Caco-2 (cell line): ENCODE measurements at regions of chr5 and their contacts with region 1.

Region 1: DNA sequence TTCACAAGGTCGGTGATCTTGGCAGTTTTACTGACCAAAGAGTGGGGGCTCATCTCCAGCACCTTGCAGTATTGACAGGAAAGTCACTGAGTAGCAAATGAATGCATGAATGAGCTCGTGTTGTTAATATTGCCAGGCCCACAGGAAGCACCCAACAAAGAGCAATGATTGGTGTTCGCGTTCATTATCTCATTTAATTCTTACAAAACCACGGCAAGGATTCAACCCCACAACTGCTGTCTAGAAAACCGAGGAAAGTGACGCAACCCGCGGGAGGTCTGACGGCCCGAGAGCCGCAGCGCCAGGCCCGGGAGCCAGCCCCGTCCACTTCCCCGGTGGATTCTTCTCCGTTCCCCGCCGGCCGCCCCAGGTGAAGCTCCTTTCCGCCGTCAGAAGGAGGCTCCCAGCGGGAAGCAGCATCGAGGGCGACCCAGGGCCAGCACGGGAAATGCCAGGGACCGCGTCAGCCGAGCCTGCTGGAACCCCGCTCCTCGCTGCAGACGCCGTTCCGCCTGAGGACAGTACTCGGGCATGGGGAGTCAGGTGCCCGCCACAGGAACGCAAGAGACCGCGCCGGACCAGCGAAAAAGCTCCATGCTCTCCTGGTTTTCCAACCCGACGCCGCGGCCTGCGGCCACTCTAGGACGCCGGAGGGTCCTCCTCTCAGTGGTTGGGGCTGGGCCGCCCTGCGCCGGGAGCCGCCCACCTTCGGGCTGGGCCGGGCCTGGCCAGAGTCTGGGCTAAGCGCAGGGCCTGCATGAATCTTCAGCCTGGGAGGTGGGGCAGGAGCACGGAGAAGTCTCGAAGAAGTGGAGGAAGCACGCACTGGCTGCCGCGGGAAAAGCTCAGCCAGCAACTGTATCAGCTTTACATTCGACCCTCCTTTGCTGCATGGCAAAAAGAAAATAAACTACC is 19.8 kb upstream of the FER start:
- DNase-seq: peak; percentile 93 to 96
- H3K4me3 ChIP-seq: peak overlapping the region; percentile 89
- H3K4me3 Mint-ChIP-seq: peak overlapping the region; percentile 78
- H3K27ac Mint-ChIP-seq: peak overlapping the region; percentile 95
- H3K4me1 ChIP-seq: peaks cover 11% of the 10 kb centered on the region
- H3K4me1 Mint-ChIP-seq: peaks cover 31% of the 10 kb centered on the region
- H3K27me3 ChIP-seq: no peaks in the 10 kb centered on the region
- H3K27me3 Mint-ChIP-seq: no peaks in the 10 kb centered on the region
- CTCF ChIP-seq: no peak

Region 2: GRCh38 chr5:108590799-108591198 is 137.1 kb before region 1 on chr5:
- CTCF ChIA-PET with region 1: no interaction called
- POLR2A ChIA-PET with region 1: no interaction called
- intact Hi-C with region 1: no loop called
- DNase-seq: no peak
- H3K4me3 ChIP-seq: no peak overlapping the region
- H3K4me3 Mint-ChIP-seq: no peak overlapping the region
- H3K27ac Mint-ChIP-seq: no peak overlapping the region
- H3K4me1 ChIP-seq: no peaks in the 10 kb centered on the region
- H3K4me1 Mint-ChIP-seq: no peaks in the 10 kb centered on the region
- H3K27me3 ChIP-seq: no peaks in the 10 kb centered on the region
- H3K27me3 Mint-ChIP-seq: peaks cover 2% of the 10 kb centered on the region
- CTCF ChIP-seq: no peak

Region 3: GRCh38 chr5:108743344-108743743 is 15.4 kb after region 1 on chr5:
- CTCF ChIA-PET with region 1: interaction called, 4 read pairs
- POLR2A ChIA-PET with region 1: interaction called, 21 read pairs
- intact Hi-C with region 1: loop called (anchors 1 kb)
- DNase-seq: peak in 1 of 2 experiments; percentile 29
- H3K4me3 ChIP-seq: no peak overlapping the region
- H3K4me3 Mint-ChIP-seq: peak overlapping the region; percentile 63
- H3K27ac Mint-ChIP-seq: peak overlapping the region; percentile 88
- H3K4me1 ChIP-seq: peaks cover 44% of the 10 kb centered on the region
- H3K4me1 Mint-ChIP-seq: peaks cover 60% of the 10 kb centered on the region
- H3K27me3 ChIP-seq: no peaks in the 10 kb centered on the region
- H3K27me3 Mint-ChIP-seq: no peaks in the 10 kb centered on the region
- CTCF ChIP-seq: no peak

Region 4: GRCh38 chr5:108748401-108749127 is 20.7 kb after region 1 on chr5:
- CTCF ChIA-PET with region 1: interaction called, 4 read pairs
- POLR2A ChIA-PET with region 1: interaction called, 21 read pairs
- intact Hi-C with region 1: loop called (anchors 1 kb)
- DNase-seq: peak; percentile 99 to 100
- H3K4me3 ChIP-seq: peak overlapping the region; percentile 98
- H3K4me3 Mint-ChIP-seq: peak overlapping the region; percentile 90
- H3K27ac Mint-ChIP-seq: peak overlapping the region; percentile 93
- H3K4me1 ChIP-seq: peaks cover 24% of the 10 kb centered on the region
- H3K4me1 Mint-ChIP-seq: peaks cover 23% of the 10 kb centered on the region
- H3K27me3 ChIP-seq: no peaks in the 10 kb centered on the region
- H3K27me3 Mint-ChIP-seq: no peaks in the 10 kb centered on the region
- CTCF ChIP-seq: no peak

Region 5: GRCh38 chr5:108854886-108855285 is 127.0 kb after region 1 on chr5:
- CTCF ChIA-PET with region 1: no interaction called
- POLR2A ChIA-PET with region 1: no interaction called
- intact Hi-C with region 1: no loop called
- DNase-seq: no peak
- H3K4me3 ChIP-seq: no peak overlapping the region
- H3K4me3 Mint-ChIP-seq: no peak overlapping the region
- H3K27ac Mint-ChIP-seq: no peak overlapping the region
- H3K4me1 ChIP-seq: no peaks in the 10 kb centered on the region
- H3K4me1 Mint-ChIP-seq: peaks cover 6% of the 10 kb centered on the region
- H3K27me3 ChIP-seq: no peaks in the 10 kb centered on the region
- H3K27me3 Mint-ChIP-seq: no peaks in the 10 kb centered on the region
- CTCF ChIP-seq: no peak

Region 6: GRCh38 chr5:109028608-109029299 is 300.8 kb after region 1 on chr5:
- CTCF ChIA-PET with region 1: no interaction called
- POLR2A ChIA-PET with region 1: no interaction called
- intact Hi-C with region 1: no loop called
- DNase-seq: no peak
- H3K4me3 ChIP-seq: no peak overlapping the region
- H3K4me3 Mint-ChIP-seq: no peak overlapping the region
- H3K27ac Mint-ChIP-seq: no peak overlapping the region
- H3K4me1 ChIP-seq: no peaks in the 10 kb centered on the region
- H3K4me1 Mint-ChIP-seq: peaks cover under 1% of the 10 kb centered on the region
- H3K27me3 ChIP-seq: no peaks in the 10 kb centered on the region
- H3K27me3 Mint-ChIP-seq: no peaks in the 10 kb centered on the region
- CTCF ChIP-seq: no peak

Region 7: DNA sequence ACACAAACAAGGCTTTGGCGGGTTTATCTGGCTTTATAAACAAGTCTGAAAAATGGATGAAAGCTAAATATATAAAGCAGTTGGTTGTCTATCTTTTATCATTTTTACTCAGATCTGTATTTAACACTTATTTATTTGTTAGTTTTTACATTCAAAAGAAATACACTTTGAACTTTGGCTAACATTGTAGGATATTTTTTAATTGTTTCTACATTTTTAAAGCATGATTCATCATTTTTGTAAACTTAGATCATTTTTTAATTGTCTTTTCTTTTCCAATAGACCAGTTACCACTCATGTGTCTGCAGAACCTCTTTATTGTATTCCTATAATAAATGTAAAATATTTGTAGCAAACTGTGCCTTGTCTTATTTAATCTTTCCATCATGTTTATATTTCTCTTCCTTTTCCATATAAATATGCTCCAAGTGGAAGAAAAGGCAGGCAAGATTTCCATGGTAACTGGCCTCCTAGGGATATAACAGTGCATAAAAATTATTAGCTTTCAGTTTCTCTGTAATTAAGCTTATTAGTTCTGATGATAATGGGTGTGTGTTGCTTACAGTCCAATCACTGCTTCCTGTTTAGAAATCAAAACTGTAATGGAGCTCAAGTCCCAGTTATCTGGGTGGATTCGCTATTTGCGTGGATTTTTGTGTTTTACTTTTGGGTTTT is 468.7 kb after region 1 on chr5:
- CTCF ChIA-PET with region 1: no interaction called
- POLR2A ChIA-PET with region 1: no interaction called
- intact Hi-C with region 1: no loop called
- DNase-seq: no peak
- H3K4me3 ChIP-seq: no peak overlapping the region
- H3K4me3 Mint-ChIP-seq: no peak overlapping the region
- H3K27ac Mint-ChIP-seq: no peak overlapping the region
- H3K4me1 ChIP-seq: no peaks in the 10 kb centered on the region
- H3K4me1 Mint-ChIP-seq: no peaks in the 10 kb centered on the region
- H3K27me3 ChIP-seq: no peaks in the 10 kb centered on the region
- H3K27me3 Mint-ChIP-seq: no peaks in the 10 kb centered on the region
- CTCF ChIP-seq: no peak